ENCODE measurements at regions of chr6 and their contacts with region 1.

Region 1: GRCh38 chr6:104940881-104941728 is 15.8 kb upstream of the LIN28B start:
- DNase-seq: peak; percentile 7
- H3K4me3 ChIP-seq: no peak overlapping the region
- H3K27ac ChIP-seq: no peak overlapping the region
- H3K4me1 ChIP-seq: peaks cover 3% of the 10 kb centered on the region
- H3K27me3 ChIP-seq: peaks cover 21% of the 10 kb centered on the region
- CTCF ChIP-seq: peak in 1 of 2 donors; percentile 24

Region 2: DNA sequence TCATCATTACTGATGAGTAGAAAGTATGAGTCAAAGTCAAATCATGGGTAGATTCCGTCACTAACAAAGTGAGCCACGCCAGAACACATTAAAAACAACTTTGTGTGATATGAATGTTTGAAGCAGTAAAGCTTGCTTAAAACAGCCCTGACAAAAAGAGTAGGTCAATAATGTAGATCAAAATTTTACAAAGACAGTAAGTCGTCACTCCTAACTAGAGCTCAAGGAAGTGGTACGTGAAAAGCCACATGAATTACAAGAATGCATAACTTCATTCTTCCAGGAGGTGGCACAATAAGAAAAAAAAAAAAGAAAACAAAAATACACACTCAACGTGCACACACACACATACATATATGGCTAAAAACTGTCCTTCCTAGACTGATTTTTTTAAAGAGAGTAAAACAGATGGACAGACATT is 151.3 kb before region 1 on chr6:
- CTCF ChIA-PET with region 1: no interaction called
- dilution Hi-C with region 1: no loop called
- in situ Hi-C with region 1: no loop called
- intact Hi-C with region 1: no loop called
- DNase-seq: peak; percentile 46
- H3K4me3 ChIP-seq: no peak overlapping the region
- H3K27ac ChIP-seq: peak overlapping the region; percentile 27
- H3K4me1 ChIP-seq: no peaks in the 10 kb centered on the region
- H3K27me3 ChIP-seq: no peaks in the 10 kb centered on the region
- CTCF ChIP-seq: peak; percentile 35 to 45

Region 3: GRCh38 chr6:104887358-104887757 is 53.7 kb before region 1 on chr6:
- CTCF ChIA-PET with region 1: no interaction called
- dilution Hi-C with region 1: no loop called
- in situ Hi-C with region 1: no loop called
- intact Hi-C with region 1: loop called (anchors 5 kb)
- DNase-seq: peak; percentile 43
- H3K4me3 ChIP-seq: no peak overlapping the region
- H3K27ac ChIP-seq: no peak overlapping the region
- H3K4me1 ChIP-seq: no peaks in the 10 kb centered on the region
- H3K27me3 ChIP-seq: no peaks in the 10 kb centered on the region
- CTCF ChIP-seq: no peak

Region 4: GRCh38 chr6:104908031-104908882 is 32.8 kb before region 1 on chr6:
- CTCF ChIA-PET with region 1: no interaction called
- dilution Hi-C with region 1: no loop called
- in situ Hi-C with region 1: no loop called
- intact Hi-C with region 1: loop called (anchors 2 kb)
- DNase-seq: peak; percentile 56
- H3K4me3 ChIP-seq: no peak overlapping the region
- H3K27ac ChIP-seq: peak overlapping the region; percentile 11
- H3K4me1 ChIP-seq: peaks cover 17% of the 10 kb centered on the region
- H3K27me3 ChIP-seq: no peaks in the 10 kb centered on the region
- CTCF ChIP-seq: no peak

Region 5: DNA sequence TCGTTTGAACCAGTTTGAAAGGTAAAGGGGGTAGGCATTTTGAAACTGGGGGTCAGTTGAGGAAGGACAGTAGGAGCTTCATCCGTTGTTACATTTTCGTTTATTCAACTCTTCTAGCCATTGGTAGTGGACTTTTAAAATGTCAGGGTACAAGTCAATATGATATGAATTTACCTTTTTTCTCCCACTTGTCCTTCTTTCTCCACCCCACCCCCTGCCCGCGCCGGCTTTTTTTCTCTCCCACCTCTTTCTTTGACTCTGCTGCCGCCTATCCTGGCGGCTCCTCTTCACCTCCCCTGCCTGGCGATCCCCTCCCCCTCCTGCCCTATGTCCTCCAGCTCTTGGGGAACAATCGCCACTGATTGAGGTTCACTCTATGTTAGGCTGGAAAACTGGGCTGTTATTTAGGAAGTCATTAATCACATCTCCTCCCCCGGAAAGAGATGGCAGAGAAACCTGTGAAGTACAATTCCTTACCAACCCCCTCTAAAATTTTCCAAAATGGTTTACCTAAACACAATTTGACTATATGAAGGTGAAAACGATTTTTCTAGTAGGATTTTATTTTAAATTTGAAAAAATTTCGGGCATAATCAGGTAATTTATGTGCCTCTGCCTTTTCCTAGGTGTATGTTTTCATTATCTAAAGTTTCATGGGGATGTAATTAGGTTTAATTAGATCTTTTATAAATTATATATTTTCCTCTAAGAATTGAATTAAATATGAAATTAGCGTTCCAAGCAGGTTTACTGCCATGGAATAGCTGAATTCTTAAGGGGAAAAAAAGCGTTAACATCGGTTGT is 15.0 kb after region 1 on chr6:
- CTCF ChIA-PET with region 1: no interaction called
- dilution Hi-C with region 1: no loop called
- in situ Hi-C with region 1: no loop called
- intact Hi-C with region 1: no loop called
- DNase-seq: no peak
- H3K4me3 ChIP-seq: no peak overlapping the region
- H3K27ac ChIP-seq: no peak overlapping the region
- H3K4me1 ChIP-seq: no peaks in the 10 kb centered on the region
- H3K27me3 ChIP-seq: peaks cover 53% of the 10 kb centered on the region
- CTCF ChIP-seq: no peak

Measured in mammary epithelial cell (primary cell).